IMR-90 (cell line): ENCODE measurements at regions of chr2 and their contacts with region 1.

Region 1: DNA sequence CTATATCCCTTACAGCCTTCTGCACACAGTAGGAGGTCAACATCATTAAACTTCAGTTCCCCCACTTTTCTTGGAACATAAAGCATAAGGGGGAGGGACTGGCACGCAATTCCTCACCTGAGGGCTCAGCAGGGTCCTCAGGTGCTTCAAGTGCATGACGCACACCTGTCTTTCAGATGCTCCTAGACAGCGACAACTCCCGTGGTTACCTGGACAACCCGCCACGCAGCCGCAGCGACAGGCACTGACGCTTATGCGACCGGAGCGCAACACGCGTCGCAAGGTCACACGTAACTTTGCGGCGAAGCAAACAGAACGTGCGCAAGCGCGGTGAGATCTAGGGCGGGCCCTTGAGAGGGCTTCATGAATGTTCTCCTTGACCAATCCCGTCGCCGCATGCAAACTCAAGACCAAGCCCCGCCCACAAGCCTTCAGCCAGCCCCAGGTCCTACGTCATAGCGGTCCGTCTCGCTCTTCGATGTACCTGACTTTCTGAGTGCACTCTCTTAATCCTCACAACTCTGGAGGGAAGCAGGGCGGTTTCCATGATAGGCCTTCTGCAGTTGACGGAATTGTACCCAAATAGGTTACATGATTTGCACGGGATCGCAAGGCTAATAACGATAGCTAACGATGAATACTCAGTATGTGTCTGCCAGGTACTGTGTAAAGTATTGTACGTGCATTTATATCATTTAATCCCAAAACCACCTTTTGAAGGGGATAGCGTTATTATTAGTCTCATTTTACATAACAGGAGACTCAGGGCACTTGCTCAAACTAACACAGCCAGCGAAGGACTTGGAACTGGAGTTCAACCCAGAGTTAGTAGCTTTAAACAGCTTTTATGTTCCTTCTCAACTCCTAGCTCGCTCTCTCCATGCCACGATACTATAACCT is at the start of gene IFT172:
- DNase-seq: peak; percentile 98
- ATAC-seq: peak; percentile 99
- H3K4me3 ChIP-seq: peak within 1 kb of the TSS; percentile 56
- H3K27ac ChIP-seq: peak within 1 kb of the TSS; percentile 18
- H3K4me1 ChIP-seq: peaks cover 5% of the 10 kb centered on the region
- H3K27me3 ChIP-seq: no peaks in the 10 kb centered on the region
- CTCF ChIP-seq: no peak
- POLR2A ChIP-seq: peak; percentile 56; the same call in 1 of the 2 replicates
- RAD21 ChIP-seq: no peak
- total RNA-seq, gene IFT172: 23.1 and 25.5 TPM in 2 replicates

Region 2: GRCh38 chr2:27471961-27472360 is 17.8 kb before region 1 on chr2:
- CTCF ChIA-PET with region 1: no interaction called
- POLR2A ChIA-PET with region 1: no interaction called
- dilution Hi-C with region 1: no loop called
- in situ Hi-C with region 1: no loop called
- intact Hi-C with region 1: no loop called
- DNase-seq: no peak
- ATAC-seq: no peak
- H3K4me3 ChIP-seq: no peak overlapping the region
- H3K27ac ChIP-seq: no peak overlapping the region
- H3K4me1 ChIP-seq: no peaks in the 10 kb centered on the region
- H3K27me3 ChIP-seq: no peaks in the 10 kb centered on the region
- CTCF ChIP-seq: no peak
- POLR2A ChIP-seq: no peak
- RAD21 ChIP-seq: no peak

Region 3: DNA sequence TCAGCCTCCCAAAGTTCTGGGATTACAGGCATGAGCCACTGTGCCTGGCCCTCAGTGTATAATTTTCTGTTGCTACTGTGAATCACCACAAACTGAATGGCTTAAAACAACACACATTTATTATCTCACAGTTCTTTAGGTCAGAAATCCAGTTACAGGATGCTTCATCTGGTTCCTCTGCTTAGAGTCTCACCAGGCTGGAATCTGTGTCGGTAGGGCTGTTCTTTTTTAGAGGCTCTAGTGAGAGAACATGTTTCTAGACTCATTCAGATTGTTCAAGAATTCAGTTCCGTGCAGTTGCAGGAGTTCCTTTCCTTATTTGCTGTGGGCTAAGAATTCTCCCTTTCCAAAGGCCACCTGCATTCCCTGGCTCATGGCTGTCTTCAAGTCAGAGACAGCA is 116.9 kb after region 1 on chr2:
- CTCF ChIA-PET with region 1: no interaction called
- POLR2A ChIA-PET with region 1: no interaction called
- dilution Hi-C with region 1: no loop called
- in situ Hi-C with region 1: no loop called
- intact Hi-C with region 1: loop called (anchors 5 kb)
- DNase-seq: peak; percentile 83
- ATAC-seq: peak; percentile 82
- H3K4me3 ChIP-seq: no peak overlapping the region
- H3K27ac ChIP-seq: no peak overlapping the region
- H3K4me1 ChIP-seq: peaks cover 3% of the 10 kb centered on the region
- H3K27me3 ChIP-seq: no peaks in the 10 kb centered on the region
- CTCF ChIP-seq: no peak
- POLR2A ChIP-seq: no peak
- RAD21 ChIP-seq: no peak

Region 4: GRCh38 chr2:27628767-27629709 is 139.3 kb after region 1 on chr2 and contains the starts of genes CCDC121 and GPN1:
- CTCF ChIA-PET with region 1: no interaction called
- POLR2A ChIA-PET with region 1: no interaction called
- dilution Hi-C with region 1: no loop called
- in situ Hi-C with region 1: no loop called
- intact Hi-C with region 1: loop called (anchors 2 kb)
- DNase-seq: peak; percentile 94
- ATAC-seq: peak; percentile 97
- H3K4me3 ChIP-seq: peak within 1 kb of the TSS; percentile 94
- H3K27ac ChIP-seq: peak within 1 kb of the TSS; percentile 83
- H3K4me1 ChIP-seq: peaks cover 3% of the 10 kb centered on the region; the same call in 1 of the 2 replicates
- H3K27me3 ChIP-seq: no peaks in the 10 kb centered on the region
- CTCF ChIP-seq: no peak
- POLR2A ChIP-seq: peak; percentile 98
- RAD21 ChIP-seq: no peak
- total RNA-seq, gene CCDC121: 2.0 and 2.2 TPM in 2 replicates
- total RNA-seq, gene GPN1: 53.0 and 63.8 TPM in 2 replicates

Region 5: GRCh38 chr2:28835781-28836180 is 1346.0 kb after region 1 on chr2:
- CTCF ChIA-PET with region 1: no interaction called
- POLR2A ChIA-PET with region 1: no interaction called
- dilution Hi-C with region 1: no loop called
- in situ Hi-C with region 1: no loop called
- intact Hi-C with region 1: no loop called
- DNase-seq: no peak
- ATAC-seq: no peak
- H3K4me3 ChIP-seq: no peak overlapping the region
- H3K27ac ChIP-seq: no peak overlapping the region
- H3K4me1 ChIP-seq: no peaks in the 10 kb centered on the region
- H3K27me3 ChIP-seq: no peaks in the 10 kb centered on the region
- CTCF ChIP-seq: no peak
- POLR2A ChIP-seq: no peak
- RAD21 ChIP-seq: no peak